ENCODE measurements at regions of chr13 and their contacts with region 1.

Region 1: DNA sequence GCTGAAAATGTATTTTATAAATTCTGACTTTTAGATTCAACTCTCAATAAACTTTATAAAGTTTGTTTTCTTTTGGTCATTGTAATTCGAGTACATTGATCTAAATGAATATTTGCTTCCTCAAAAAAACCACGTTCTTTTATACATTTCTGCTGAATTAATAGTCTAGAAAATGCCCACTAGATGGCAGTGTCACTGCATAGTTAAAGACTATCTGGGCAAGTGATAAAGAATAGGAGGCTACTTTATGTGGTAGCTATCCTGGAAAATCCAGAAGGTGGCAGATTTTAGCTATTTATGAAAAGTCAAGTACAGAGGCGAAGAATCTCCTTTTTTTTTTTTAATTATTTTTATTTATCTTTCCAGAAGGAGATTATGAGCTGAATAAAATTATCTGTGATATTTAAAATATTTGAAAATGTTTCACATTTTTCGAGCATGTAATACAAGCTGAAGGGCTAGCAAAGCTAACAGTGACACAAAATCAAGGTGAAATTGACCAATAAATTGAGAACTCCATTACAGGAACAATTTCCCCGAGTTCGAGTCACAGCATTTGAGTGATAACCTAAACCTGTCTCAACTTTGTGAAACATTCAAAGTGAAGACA is 221.8 kb downstream of the OLFM4 start:
- DNase-seq: peak; percentile 48

Region 2: GRCh38 chr13:53782488-53782961 is 532.2 kb after region 1 on chr13:
- CTCF ChIA-PET with region 1: interaction called, 12 read pairs
- POLR2A ChIA-PET with region 1: no interaction called
- DNase-seq: peak; percentile 46

Measured in HEK293T (cell line).